AG04449 (cell line): ENCODE measurements at regions of chr6 and their contacts with region 1.

Region 1: DNA sequence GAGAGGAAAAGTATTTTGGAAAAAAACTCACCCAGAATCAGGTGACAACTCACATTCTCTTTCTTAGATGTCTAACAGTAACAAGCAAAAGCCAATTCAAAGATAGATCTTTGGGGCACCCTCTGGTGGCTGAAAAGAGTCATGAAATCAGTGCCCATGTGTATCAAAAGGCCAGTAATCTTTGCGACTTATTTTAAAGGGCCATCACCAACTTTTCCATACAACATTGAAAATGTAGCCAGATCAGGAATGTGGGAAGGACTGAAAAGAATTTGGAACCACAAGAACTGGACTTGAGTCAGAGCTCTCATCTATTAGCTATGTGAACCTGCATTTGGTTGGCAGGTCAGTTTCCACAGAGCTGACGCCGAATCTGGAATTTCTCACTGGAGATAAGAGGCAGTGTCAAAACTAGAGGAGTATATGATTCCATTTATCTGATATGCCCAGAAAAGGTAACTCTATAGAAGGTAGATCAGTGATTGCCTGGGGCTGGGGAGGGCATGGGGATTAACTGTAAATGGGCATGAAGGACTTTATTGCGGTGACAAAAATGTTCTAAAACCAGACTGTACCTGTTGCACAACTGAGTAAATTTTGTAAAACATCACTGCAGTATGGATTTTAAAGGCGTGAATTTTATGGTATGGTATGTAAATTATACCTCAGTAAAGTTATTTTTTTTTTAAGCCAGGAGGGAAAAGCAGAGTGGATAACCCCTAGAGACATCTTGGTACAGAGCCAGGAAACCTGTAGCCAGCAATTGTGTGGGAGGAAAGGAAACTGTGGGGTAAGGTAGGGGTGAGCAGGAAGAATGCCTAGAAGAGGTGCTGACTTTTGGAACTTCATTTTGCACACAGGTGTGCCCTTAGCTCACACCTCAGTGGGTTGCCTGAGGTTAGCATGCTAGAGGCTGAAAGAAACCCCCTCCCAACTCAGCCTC is 117.1 kb upstream of the ASF1A start:
- DNase-seq: peak; percentile 33
- H3K4me3 ChIP-seq: no peak overlapping the region
- CTCF ChIP-seq: peak; percentile 66

Region 2: GRCh38 chr6:117818449-117818848 is 958.4 kb before region 1 on chr6:
- CTCF ChIA-PET with region 1: no interaction called
- POLR2A ChIA-PET with region 1: no interaction called
- DNase-seq: no peak
- H3K4me3 ChIP-seq: no peak overlapping the region
- CTCF ChIP-seq: no peak

Region 3: GRCh38 chr6:118216751-118217150 is 560.1 kb before region 1 on chr6:
- CTCF ChIA-PET with region 1: no interaction called
- POLR2A ChIA-PET with region 1: no interaction called
- DNase-seq: no peak
- H3K4me3 ChIP-seq: no peak overlapping the region
- CTCF ChIP-seq: no peak

Region 4: DNA sequence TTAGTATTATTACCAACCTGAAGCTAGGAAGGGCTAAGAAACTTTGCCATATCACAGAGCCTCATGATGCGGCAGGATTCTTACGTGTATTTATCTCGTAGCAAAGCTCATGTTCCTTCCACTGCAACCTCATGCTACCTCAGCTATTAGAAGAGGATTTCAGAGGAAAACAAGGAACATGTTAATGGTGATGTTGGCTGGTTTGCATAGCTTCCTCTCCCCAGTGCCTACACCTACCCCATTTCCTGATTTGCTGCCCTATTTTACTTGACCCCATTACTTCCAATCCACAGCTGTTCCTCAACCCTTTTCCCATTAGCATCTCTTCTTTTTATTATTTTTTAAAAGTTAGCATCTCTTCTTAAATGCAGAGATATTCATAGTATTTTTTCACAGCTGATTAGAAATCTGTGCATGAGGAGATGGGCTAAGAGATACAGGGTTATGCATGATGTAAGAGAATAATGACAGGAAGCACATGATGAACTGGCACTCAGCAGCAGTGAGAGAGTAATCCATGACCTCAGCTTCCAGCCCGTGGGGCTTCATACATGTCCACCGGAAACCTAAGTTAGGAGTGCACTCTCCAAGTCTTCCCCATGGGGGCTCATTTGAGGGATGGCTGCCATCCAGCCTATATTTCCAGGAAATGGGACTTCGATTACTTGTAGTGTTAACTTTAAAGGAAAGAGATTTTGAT is 11.0 kb after region 1 on chr6:
- CTCF ChIA-PET with region 1: interaction called, 16 read pairs
- POLR2A ChIA-PET with region 1: no interaction called
- DNase-seq: no peak
- H3K4me3 ChIP-seq: no peak overlapping the region
- CTCF ChIP-seq: no peak